Ovary (tissue), 10 donors: ENCODE measurements at regions of chr11 and their contacts with region 1.

Region 1: GRCh38 chr11:33065445-33066178 is 26.2 kb downstream of the TCP11L1 start:
- DNase-seq: peak; percentile 40 to 75 (median 59)
- H3K4me3 ChIP-seq: no peak overlapping the region
- H3K27ac ChIP-seq: no peak overlapping the region
- H3K4me1 ChIP-seq: no peaks in the 10 kb centered on the region
- H3K27me3 ChIP-seq: no peaks in the 10 kb centered on the region
- CTCF ChIP-seq: peak; percentile 42 to 61 (median 61)
- EP300 ChIP-seq: no peak
- POLR2A ChIP-seq: no peak

Region 2: DNA sequence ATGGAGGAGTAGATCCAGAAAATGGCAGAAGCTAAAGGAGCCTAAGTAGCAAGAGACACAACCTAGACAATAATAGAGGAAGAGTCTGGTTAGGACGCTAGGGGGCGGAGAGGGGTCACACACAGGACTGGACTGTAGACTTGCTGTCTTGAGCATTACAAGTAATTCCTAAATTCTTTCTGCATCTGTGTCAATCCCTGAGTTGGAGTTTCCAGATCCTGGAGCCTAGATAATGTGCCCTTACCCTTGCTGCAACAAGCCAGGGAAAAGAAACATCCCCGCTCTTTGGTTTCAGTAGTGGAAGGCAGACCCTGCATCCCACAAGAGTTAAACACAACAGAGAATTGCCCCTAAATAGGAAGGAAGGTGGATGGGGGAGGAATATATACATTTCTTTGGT is 256.3 kb before region 1 on chr11:
- intact Hi-C with region 1: loop called in 1 of 4 experiments (anchors 2 kb)
- DNase-seq: peak; percentile 37 to 61 (median 57)
- H3K4me3 ChIP-seq: no peak overlapping the region
- H3K27ac ChIP-seq: no peak overlapping the region
- H3K4me1 ChIP-seq: no peaks in the 10 kb centered on the region
- H3K27me3 ChIP-seq: no peaks in the 10 kb centered on the region
- CTCF ChIP-seq: peak in 1 of 3 donors; percentile 33
- EP300 ChIP-seq: no peak
- POLR2A ChIP-seq: no peak

Region 3: GRCh38 chr11:32960553-32961164 is 105.0 kb before region 1 on chr11:
- intact Hi-C with region 1: loop called (anchors 5 to 10 kb)
- DNase-seq: no peak
- H3K4me3 ChIP-seq: no peak overlapping the region
- H3K27ac ChIP-seq: no peak overlapping the region
- H3K4me1 ChIP-seq: no peaks in the 10 kb centered on the region
- H3K27me3 ChIP-seq: no peaks in the 10 kb centered on the region
- CTCF ChIP-seq: peak in 2 of 3 donors; percentile 26 to 41
- EP300 ChIP-seq: no peak
- POLR2A ChIP-seq: no peak

Region 4: GRCh38 chr11:32968541-32968940 is 97.1 kb before region 1 on chr11:
- intact Hi-C with region 1: loop called (anchors 5 to 10 kb)
- DNase-seq: no peak
- H3K4me3 ChIP-seq: no peak overlapping the region
- H3K27ac ChIP-seq: no peak overlapping the region
- H3K4me1 ChIP-seq: no peaks in the 10 kb centered on the region
- H3K27me3 ChIP-seq: no peaks in the 10 kb centered on the region
- CTCF ChIP-seq: no peak
- EP300 ChIP-seq: no peak
- POLR2A ChIP-seq: no peak